ENCODE measurements at regions of chr12 and their contacts with region 1.

Region 1: GRCh38 chr12:57888409-57889157 is 42.1 kb upstream of the CTDSP2 start:
- DNase-seq: peak; percentile 90
- H3K4me3 Mint-ChIP-seq: peak overlapping the region; percentile 63
- H3K27ac Mint-ChIP-seq: peak overlapping the region; percentile 91
- H3K4me1 Mint-ChIP-seq: peaks cover 49% of the 10 kb centered on the region
- H3K27me3 Mint-ChIP-seq: no peaks in the 10 kb centered on the region
- CTCF ChIP-seq: no peak

Region 2: GRCh38 chr12:57816855-57817151 is 71.8 kb before region 1 on chr12:
- CTCF ChIA-PET with region 1: no interaction called
- POLR2A ChIA-PET with region 1: no interaction called
- intact Hi-C with region 1: no loop called
- DNase-seq: peak; percentile 39
- H3K4me3 Mint-ChIP-seq: no peak overlapping the region
- H3K27ac Mint-ChIP-seq: no peak overlapping the region
- H3K4me1 Mint-ChIP-seq: peaks cover 5% of the 10 kb centered on the region
- H3K27me3 Mint-ChIP-seq: no peaks in the 10 kb centered on the region
- CTCF ChIP-seq: no peak

Region 3: DNA sequence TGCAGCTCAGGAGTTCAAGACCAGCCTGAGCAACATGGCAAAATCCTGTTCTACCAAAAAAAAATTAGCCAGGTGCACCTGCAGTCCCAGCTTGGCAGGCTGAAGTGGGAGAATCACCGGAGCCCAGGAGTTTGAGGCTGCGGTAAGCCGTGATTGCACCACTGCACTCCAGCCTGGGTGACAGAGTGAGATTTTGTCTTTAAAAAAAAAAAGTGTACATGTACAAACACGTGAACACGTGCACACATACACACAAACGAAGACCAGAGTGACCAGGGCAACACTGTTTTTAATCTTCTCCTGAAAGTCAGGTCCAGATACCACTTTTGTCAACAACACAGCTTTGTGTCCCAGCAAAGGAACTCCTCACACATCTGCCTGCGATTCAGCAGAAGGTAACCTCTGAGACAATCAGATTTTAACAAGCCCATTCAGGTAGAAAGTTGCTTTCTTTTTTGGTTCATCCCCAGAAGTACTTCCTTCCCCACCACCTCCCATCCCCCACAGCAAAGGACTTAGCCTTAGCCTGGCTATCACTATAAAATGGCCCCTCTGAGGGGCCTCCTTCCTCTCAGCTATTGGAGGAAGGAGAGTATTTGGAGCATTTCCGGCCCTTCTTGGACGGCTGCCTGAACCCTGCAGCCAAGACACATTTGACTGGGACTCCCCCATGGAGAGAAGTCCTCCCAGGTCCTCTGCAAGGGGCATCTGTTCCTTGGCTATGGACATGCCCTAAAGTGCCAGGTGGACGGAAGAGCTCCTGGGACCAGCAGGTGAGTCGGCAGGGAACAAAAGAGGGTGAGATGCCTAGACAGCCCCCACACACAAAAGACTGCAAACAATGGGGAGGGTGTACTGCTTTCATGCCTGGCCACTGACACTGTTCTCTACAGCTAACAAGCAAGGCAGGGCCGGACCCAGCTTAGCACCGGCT is 51.9 kb before region 1 on chr12:
- CTCF ChIA-PET with region 1: interaction called, 89 read pairs
- POLR2A ChIA-PET with region 1: interaction called, 167 read pairs
- intact Hi-C with region 1: no loop called
- DNase-seq: peak; percentile 60
- H3K4me3 Mint-ChIP-seq: peak overlapping the region; percentile 46
- H3K27ac Mint-ChIP-seq: peak overlapping the region; percentile 59
- H3K4me1 Mint-ChIP-seq: peaks cover 41% of the 10 kb centered on the region
- H3K27me3 Mint-ChIP-seq: no peaks in the 10 kb centered on the region
- CTCF ChIP-seq: no peak

Region 4: DNA sequence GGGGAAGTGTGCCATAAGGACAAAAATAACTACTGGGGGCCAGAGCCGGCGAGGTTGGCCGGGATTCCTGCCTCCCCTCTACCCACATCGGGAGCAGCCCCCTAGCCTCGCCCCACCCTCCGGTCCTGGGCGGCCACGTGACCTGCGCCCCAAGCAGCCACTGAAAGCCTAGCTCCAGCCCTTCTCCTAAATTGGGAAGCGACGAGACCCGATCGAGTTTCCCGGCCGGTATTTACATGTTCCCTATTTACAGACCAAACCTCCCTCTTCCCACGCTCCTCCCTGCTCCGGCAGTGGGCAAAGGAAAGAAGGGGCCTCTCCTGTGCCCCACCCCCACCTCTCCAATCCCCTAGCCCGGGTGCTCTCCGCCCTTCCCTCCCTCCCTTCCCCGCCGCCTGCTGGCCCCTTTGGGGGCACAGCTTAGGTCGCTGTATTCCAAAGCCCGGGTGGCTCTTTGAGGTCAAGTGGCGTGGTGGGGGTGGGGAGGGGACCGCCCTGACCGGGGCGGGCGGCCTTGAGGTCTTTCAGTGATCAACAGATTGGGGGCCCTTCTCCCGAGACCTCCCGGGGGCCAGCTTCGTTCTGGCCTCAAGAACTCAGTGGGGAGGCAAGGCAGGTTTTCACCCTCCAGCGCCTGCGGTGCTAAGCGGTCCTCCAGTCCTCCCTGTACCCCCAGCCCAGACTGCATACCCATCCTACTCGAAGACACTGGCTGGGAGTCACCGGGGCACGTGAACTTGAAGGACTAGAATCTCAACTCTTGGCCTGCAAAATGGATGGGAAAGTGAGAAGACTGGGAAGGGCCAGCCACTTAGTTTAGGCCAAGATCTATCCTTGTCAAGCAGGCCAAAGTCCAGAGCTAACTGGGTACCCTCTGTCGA is 35.7 kb before region 1 on chr12:
- CTCF ChIA-PET with region 1: interaction called, 71 read pairs
- POLR2A ChIA-PET with region 1: interaction called, 167 read pairs
- intact Hi-C with region 1: no loop called
- DNase-seq: no peak
- H3K4me3 Mint-ChIP-seq: no peak overlapping the region
- H3K27ac Mint-ChIP-seq: no peak overlapping the region
- H3K4me1 Mint-ChIP-seq: no peaks in the 10 kb centered on the region
- H3K27me3 Mint-ChIP-seq: peaks cover 16% of the 10 kb centered on the region
- CTCF ChIP-seq: no peak